ENCODE measurements at regions of chr6 and their contacts with region 1.

Region 1: GRCh38 chr6:127554435-127555006 is 22.5 kb upstream of the C6orf58 start:
- DNase-seq: no peak
- H3K4me3 Mint-ChIP-seq: no peak overlapping the region
- H3K27ac Mint-ChIP-seq: no peak overlapping the region
- H3K4me1 Mint-ChIP-seq: no peaks in the 10 kb centered on the region
- H3K27me3 Mint-ChIP-seq: peaks cover 30% of the 10 kb centered on the region

Region 2: GRCh38 chr6:127641905-127642304 is 87.4 kb after region 1 on chr6:
- intact Hi-C with region 1: loop called (anchors 1 kb)
- DNase-seq: no peak
- H3K4me3 Mint-ChIP-seq: no peak overlapping the region
- H3K27ac Mint-ChIP-seq: no peak overlapping the region
- H3K4me1 Mint-ChIP-seq: no peaks in the 10 kb centered on the region
- H3K27me3 Mint-ChIP-seq: peaks cover 10% of the 10 kb centered on the region

Region 3: GRCh38 chr6:128327890-128328289 is 773.4 kb after region 1 on chr6:
- intact Hi-C with region 1: loop called (anchors 10 kb)
- DNase-seq: peak; percentile 22
- H3K4me3 Mint-ChIP-seq: no peak overlapping the region
- H3K27ac Mint-ChIP-seq: no peak overlapping the region
- H3K4me1 Mint-ChIP-seq: no peaks in the 10 kb centered on the region
- H3K27me3 Mint-ChIP-seq: peaks cover 7% of the 10 kb centered on the region